ENCODE measurements at regions of chr2 and their contacts with region 1.

Region 1: DNA sequence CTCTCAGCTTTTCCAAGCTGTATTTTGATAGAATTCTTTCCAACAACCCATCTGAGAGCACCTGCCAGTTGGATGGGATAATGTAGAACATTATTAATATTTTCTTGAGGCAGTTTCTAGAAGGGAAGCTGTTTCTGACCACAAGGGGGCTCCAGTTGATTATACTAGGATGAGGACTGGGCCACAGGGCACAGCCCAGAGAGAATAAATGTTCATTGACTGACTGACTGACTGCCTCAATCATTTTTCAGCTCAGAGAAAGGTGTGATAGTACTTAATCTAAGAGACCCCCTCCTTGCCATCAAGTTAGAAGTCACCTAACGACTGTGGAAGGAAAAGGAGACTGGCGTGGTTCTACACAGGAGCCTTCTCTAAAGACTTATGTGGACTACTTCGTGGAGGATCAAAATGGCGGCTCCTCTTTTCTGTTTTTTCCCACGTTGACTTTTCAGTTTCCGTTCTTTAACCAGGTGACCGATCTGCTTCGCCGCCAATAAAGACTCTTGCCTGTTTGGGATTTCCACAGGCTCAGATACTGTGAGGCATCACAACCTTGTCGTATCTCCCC is 31.9 kb upstream of the CREG2 start:
- DNase-seq: peak in 8 of 9 donors; percentile 41 to 74 (median 68)
- ATAC-seq: peak; percentile 87
- H3K4me3 ChIP-seq: no peak overlapping the region
- H3K4me3 Mint-ChIP-seq: no peak overlapping the region
- H3K27ac ChIP-seq: no peak overlapping the region
- H3K27ac Mint-ChIP-seq: peak overlapping the region in 1 of 9 donors; percentile 64
- H3K4me1 ChIP-seq: no peaks in the 10 kb centered on the region
- H3K4me1 Mint-ChIP-seq: peaks cover 0 to 5% (median 0%) of the 10 kb centered on the region in 7 donors
- H3K27me3 ChIP-seq: no peaks in the 10 kb centered on the region
- H3K27me3 Mint-ChIP-seq: peaks cover 0 to 6% (median 0%) of the 10 kb centered on the region in 5 donors

Region 2: DNA sequence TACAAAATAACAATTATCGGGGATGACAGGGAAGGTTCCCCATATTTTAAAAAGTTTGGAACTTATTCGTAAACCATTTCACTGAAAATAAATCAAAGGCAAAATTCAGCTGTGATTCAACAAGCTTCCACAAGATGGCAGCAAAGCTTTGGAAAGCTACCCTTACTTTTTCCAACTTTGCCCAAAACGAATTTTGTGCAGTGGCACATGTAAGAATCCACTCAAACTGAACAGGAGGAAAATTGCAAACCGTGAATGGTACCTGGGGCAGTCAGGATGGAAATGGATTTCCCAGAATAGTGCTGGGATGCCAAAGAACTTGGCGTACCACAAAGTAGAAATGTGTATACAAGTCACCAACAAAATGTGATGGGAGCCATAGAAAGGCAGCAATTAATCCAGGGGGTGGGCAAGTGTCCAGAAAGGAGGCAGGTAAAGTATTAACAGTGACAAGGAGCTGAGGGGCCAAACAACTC is 406.4 kb before region 1 on chr2:
- CTCF ChIA-PET with region 1: no interaction called
- POLR2A ChIA-PET with region 1: no interaction called
- intact Hi-C with region 1: loop called in 1 of 2 experiments (anchors 5 kb)
- DNase-seq: peak in 7 of 9 donors; percentile 16 to 51 (median 38)
- ATAC-seq: no peak
- H3K4me3 ChIP-seq: no peak overlapping the region
- H3K4me3 Mint-ChIP-seq: no peak overlapping the region
- H3K27ac ChIP-seq: no peak overlapping the region
- H3K27ac Mint-ChIP-seq: no peak overlapping the region
- H3K4me1 ChIP-seq: no peaks in the 10 kb centered on the region
- H3K4me1 Mint-ChIP-seq: peaks cover 6 to 28% (median 12%) of the 10 kb centered on the region in 7 donors
- H3K27me3 ChIP-seq: no peaks in the 10 kb centered on the region
- H3K27me3 Mint-ChIP-seq: no peaks in the 10 kb centered on the region

Region 3: GRCh38 chr2:101328474-101329007 is 90.6 kb before region 1 on chr2:
- CTCF ChIA-PET with region 1: no interaction called
- POLR2A ChIA-PET with region 1: no interaction called
- intact Hi-C with region 1: no loop called
- DNase-seq: peak in 7 of 9 donors; percentile 43 to 84 (median 81)
- ATAC-seq: peak; percentile 94
- H3K4me3 ChIP-seq: peak overlapping the region; percentile 43
- H3K4me3 Mint-ChIP-seq: no peak overlapping the region
- H3K27ac ChIP-seq: peak overlapping the region; percentile 49
- H3K27ac Mint-ChIP-seq: no peak overlapping the region
- H3K4me1 ChIP-seq: peaks cover 34 to 60% of the 10 kb centered on the region in 2 donors
- H3K4me1 Mint-ChIP-seq: peaks cover 8 to 29% (median 23%) of the 10 kb centered on the region in 7 donors
- H3K27me3 ChIP-seq: no peaks in the 10 kb centered on the region
- H3K27me3 Mint-ChIP-seq: no peaks in the 10 kb centered on the region

Region 4: DNA sequence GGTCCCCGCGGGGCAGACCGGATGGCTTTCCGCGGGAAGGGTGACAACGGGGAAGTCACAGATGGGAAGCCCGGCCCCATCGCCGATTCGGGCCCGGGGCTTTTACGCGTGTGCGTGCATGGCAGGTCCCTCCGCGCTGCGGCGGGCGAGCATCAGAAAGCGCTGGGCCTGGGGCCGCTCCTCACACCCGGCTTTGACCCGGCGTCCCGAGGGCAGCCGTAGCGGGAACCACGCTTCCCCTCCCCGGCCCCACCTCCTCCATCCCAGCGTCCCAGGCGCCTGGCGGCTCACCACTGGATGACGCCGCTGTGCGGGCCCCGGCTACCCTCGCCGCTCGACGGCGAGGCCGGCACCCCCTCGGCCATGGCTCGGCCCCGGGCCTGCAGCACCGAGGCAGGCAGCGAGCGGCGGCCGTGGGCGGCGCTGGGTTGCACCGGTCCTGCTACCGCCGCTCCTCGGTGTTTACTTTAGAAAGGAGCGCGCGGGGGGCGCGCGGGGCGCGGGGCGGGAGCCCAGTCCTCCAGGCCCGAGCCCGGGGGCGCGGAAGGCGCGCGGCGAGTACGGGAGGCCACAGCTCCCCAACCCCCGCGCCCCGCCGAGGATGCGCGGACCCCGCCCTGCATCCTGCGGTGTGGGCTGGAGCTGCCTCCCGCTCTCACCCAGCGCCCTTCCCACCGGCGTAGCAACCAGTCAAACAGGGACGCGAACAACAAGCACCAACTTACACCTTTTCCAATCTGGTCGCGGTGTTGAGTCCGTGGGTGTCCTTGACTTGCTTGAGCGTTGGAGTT is 54.9 kb after region 1 on chr2:
- CTCF ChIA-PET with region 1: interaction called, 3 read pairs
- POLR2A ChIA-PET with region 1: no interaction called
- intact Hi-C with region 1: loop called in 1 of 2 experiments (anchors 5 kb)
- DNase-seq: peak; percentile 7 to 70 (median 20)
- ATAC-seq: peak; percentile 46
- H3K4me3 ChIP-seq: peak overlapping the region; percentile 48
- H3K4me3 Mint-ChIP-seq: peak overlapping the region; percentile 81 to 90 (median 85)
- H3K27ac ChIP-seq: no peak overlapping the region
- H3K27ac Mint-ChIP-seq: peak overlapping the region in 5 of 9 donors; percentile 36 to 92 (median 73)
- H3K4me1 ChIP-seq: peaks cover 0 to 6% of the 10 kb centered on the region in 2 donors
- H3K4me1 Mint-ChIP-seq: peaks cover 6 to 50% (median 11%) of the 10 kb centered on the region in 7 donors
- H3K27me3 ChIP-seq: no peaks in the 10 kb centered on the region
- H3K27me3 Mint-ChIP-seq: peaks cover 0 to 7% (median 0%) of the 10 kb centered on the region in 5 donors

Region 5: GRCh38 chr2:101725515-101726192 is 306.5 kb after region 1 on chr2:
- CTCF ChIA-PET with region 1: interaction called, 12 read pairs
- POLR2A ChIA-PET with region 1: interaction called, 7 read pairs
- intact Hi-C with region 1: loop called in 1 of 2 experiments (anchors 1 kb)
- DNase-seq: peak in 4 of 9 donors; percentile 31 to 43 (median 38)
- ATAC-seq: no peak
- H3K4me3 ChIP-seq: no peak overlapping the region
- H3K4me3 Mint-ChIP-seq: peak overlapping the region in 7 of 10 donors; percentile 2 to 55 (median 38)
- H3K27ac ChIP-seq: no peak overlapping the region
- H3K27ac Mint-ChIP-seq: peak overlapping the region in 5 of 9 donors; percentile 34 to 78 (median 38)
- H3K4me1 ChIP-seq: peaks cover 26 to 84% of the 10 kb centered on the region in 2 donors
- H3K4me1 Mint-ChIP-seq: peaks cover 66 to 99% (median 96%) of the 10 kb centered on the region in 7 donors
- H3K27me3 ChIP-seq: no peaks in the 10 kb centered on the region
- H3K27me3 Mint-ChIP-seq: no peaks in the 10 kb centered on the region

Region 6: DNA sequence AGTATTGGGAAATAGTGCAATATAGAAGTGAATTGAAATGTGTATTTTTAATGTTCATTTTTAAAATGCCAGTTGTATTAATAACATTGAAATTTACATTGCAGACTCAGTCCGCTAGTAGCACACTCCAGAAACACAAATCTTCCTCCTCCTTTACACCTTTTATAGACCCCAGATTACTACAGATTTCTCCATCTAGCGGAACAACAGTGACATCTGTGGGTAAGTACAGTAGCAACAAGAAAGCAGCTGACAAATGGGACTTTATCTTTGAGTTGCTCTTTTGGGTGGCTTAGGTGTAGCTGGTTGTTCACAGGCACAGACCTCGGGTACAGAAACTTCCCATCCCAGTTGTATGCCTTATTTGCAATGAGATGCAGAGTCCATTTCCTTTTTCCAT is 454.4 kb after region 1 on chr2:
- CTCF ChIA-PET with region 1: no interaction called
- POLR2A ChIA-PET with region 1: no interaction called
- intact Hi-C with region 1: loop called (anchors 1 to 2 kb)
- DNase-seq: no peak
- ATAC-seq: no peak
- H3K4me3 ChIP-seq: no peak overlapping the region
- H3K4me3 Mint-ChIP-seq: no peak overlapping the region
- H3K27ac ChIP-seq: no peak overlapping the region
- H3K27ac Mint-ChIP-seq: peak overlapping the region in 4 of 9 donors; percentile 6 to 34 (median 14)
- H3K4me1 ChIP-seq: no peaks in the 10 kb centered on the region
- H3K4me1 Mint-ChIP-seq: peaks cover 6 to 10% (median 8%) of the 10 kb centered on the region in 7 donors
- H3K27me3 ChIP-seq: no peaks in the 10 kb centered on the region
- H3K27me3 Mint-ChIP-seq: no peaks in the 10 kb centered on the region

Measured in naive thymus-derived CD4-positive, alpha-beta T cell (primary cell).